Activated CD4-positive, alpha-beta T cell treated with anti-CD3 and anti-CD28 coated beads for 36 hours (primary cell): ENCODE measurements at regions of chr4 and their contacts with region 1.

Region 1: DNA sequence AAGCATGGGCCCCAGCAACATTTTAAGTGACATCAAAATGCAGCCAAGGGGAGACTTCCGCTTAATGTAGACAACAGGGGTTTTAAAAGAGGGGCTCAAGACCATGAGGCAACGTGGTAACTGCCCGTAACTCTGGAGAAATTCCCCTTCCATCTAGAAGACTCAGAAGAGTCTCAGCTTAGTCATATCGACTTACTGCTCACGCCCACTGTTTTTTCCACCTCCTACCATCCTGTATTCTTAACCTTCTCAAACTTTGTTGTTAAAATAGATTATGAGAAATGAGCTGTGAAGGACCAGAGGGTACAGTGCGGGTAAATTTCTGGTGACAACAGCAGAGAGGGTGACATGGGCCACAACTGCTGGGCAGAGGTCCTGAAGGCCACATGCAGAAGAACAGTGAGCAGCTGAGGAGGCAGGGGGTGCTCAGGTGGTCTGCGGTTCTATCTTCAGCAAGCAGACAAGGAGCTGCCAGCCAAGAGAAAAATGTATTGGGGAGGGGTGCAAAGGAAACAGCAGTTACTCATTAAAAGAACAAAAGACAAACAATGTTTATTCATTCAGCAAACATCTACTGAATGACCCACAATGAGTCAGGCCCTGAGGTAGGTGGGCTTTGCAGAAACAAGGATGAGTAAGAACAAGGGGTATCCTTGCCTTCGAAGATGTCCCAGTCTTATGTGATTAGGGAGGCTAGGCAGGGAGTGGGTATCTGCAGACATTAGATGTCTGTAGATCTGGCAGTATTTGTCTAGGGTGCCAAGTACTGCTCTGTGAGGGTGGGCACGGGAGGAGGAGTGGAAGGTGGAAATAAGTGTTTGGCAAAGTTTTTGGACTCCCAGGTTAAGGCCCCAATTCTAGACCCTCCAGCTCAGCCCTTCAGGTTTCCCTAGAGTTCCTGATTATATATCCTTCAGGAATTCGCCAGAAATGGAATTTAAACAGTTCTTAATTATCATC is 175.3 kb downstream of the TSPAN5 start:
- DNase-seq: peak; percentile 74
- ATAC-seq: peak; percentile 84
- H3K4me3 Mint-ChIP-seq: peak overlapping the region; percentile 54
- H3K27ac Mint-ChIP-seq: peak overlapping the region; percentile 98
- H3K4me1 Mint-ChIP-seq: peaks cover 80% of the 10 kb centered on the region
- H3K27me3 Mint-ChIP-seq: no peaks in the 10 kb centered on the region

Region 2: DNA sequence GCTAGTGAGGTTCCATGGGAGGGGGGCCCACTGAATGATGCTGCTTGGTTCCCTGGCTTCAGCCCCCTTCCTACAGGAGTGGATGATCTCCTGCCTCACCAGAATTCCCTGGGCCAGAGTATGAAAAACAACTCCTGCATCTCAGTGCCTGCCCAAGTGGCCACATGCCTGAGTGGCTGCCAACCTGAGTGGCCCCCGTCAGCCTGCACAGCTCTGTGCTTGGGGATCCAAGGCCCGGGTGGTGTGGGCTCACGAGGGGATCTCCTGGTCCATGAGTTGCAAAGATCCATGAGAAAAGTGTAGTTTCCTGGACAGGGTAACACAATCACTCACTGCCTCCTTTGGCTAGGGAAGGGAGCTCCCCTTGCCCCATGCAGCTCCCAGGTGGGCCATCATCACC is 357.0 kb before region 1 on chr4:
- CTCF ChIA-PET with region 1: no interaction called
- POLR2A ChIA-PET with region 1: no interaction called
- intact Hi-C with region 1: no loop called
- DNase-seq: no peak
- ATAC-seq: no peak
- H3K4me3 Mint-ChIP-seq: no peak overlapping the region
- H3K27ac Mint-ChIP-seq: no peak overlapping the region
- H3K4me1 Mint-ChIP-seq: no peaks in the 10 kb centered on the region
- H3K27me3 Mint-ChIP-seq: peaks cover 7% of the 10 kb centered on the region

Region 3: DNA sequence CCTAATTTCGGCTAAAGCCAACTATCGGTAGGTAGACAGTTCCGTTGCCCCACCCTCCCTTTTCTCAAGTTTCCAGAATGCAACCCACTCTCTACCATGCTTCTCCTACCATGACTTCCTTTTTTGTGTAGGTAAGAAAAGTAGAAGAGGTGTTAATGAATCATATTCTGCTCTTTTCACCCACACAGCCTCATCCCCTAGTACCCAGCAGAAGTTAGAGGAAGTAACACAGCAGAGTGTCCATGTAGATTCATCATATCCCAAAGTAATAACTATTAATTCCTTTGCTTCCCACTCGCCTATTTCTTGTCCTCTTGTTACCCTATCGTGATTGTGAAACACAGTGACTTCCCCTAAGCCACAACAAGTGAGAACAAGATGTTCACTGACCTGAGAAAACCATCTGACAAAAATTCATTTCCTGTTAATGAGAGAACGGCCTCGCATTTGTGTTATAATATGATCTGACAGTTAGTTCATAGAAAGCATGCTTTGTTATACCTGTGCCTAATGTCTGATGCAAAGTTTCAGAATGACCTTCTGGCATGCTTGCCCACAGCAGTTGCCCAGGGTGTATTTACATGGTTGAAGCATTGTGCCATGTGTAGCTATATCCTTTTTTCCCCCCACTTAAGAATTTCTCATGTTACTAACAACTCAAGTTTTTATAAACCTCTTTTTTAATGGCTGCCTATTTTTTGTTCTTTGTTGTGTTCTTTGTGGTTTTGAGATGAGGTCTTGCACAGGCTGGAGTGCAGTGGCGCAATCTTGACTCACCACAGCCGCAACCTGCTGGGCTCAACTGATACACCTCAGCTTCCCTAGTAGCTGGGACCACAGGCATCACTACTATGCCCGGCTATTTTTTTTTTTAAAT is 36.4 kb before region 1 on chr4:
- CTCF ChIA-PET with region 1: no interaction called
- POLR2A ChIA-PET with region 1: no interaction called
- intact Hi-C with region 1: loop called (anchors 2 kb)
- DNase-seq: peak; percentile 78
- ATAC-seq: peak; percentile 91
- H3K4me3 Mint-ChIP-seq: peak overlapping the region; percentile 43
- H3K27ac Mint-ChIP-seq: peak overlapping the region; percentile 93
- H3K4me1 Mint-ChIP-seq: peaks cover 36% of the 10 kb centered on the region
- H3K27me3 Mint-ChIP-seq: no peaks in the 10 kb centered on the region

Region 4: GRCh38 chr4:98510757-98511517 is 27.8 kb after region 1 on chr4:
- CTCF ChIA-PET with region 1: interaction called, 3 read pairs
- POLR2A ChIA-PET with region 1: no interaction called
- intact Hi-C with region 1: loop called (anchors 1 kb)
- DNase-seq: peak; percentile 65
- ATAC-seq: peak; percentile 88
- H3K4me3 Mint-ChIP-seq: no peak overlapping the region
- H3K27ac Mint-ChIP-seq: peak overlapping the region; percentile 75
- H3K4me1 Mint-ChIP-seq: peaks cover 53% of the 10 kb centered on the region
- H3K27me3 Mint-ChIP-seq: no peaks in the 10 kb centered on the region

Region 5: DNA sequence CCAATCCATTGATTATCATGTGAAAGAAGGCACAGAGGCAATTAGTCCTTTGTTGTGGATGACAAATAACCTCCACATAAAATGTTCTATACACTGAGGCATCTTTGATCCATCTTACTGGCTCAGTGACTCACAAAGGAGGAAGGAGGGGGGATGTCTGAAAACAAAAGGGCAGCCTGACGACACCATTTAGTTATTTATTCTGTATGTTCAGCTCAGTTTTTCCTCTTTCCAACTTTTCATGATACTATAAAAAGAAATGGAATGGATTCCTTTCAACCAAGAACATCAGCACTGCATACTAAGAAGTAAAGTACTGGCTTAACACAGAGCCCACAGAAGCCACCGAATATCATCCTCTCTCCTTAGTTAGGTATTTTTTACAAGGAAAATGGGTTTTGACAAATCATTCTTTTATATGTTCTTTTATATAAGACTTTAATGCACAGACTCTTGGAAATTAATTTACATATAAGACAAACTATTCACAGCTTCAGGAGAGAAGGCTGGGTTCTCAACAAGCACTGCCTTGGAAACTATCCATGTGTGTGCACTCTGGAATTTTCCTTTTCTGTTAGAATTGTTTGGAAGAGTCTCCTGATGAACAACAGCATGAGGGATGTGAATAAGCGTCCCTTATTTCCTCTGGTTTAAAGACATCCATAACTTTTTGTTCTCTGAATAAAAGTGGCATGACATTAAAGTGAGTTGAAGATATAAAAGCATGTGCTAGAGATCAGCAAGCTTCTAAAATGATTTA is 39.7 kb after region 1 on chr4:
- CTCF ChIA-PET with region 1: interaction called, 4 read pairs
- POLR2A ChIA-PET with region 1: interaction called, 6 read pairs
- intact Hi-C with region 1: loop called (anchors 2 kb)
- DNase-seq: no peak
- ATAC-seq: peak; percentile 84
- H3K4me3 Mint-ChIP-seq: peak overlapping the region; percentile 28
- H3K27ac Mint-ChIP-seq: peak overlapping the region; percentile 74
- H3K4me1 Mint-ChIP-seq: peaks cover 64% of the 10 kb centered on the region
- H3K27me3 Mint-ChIP-seq: no peaks in the 10 kb centered on the region

Region 6: GRCh38 chr4:99002279-99002678 is 519.2 kb after region 1 on chr4:
- CTCF ChIA-PET with region 1: no interaction called
- POLR2A ChIA-PET with region 1: no interaction called
- intact Hi-C with region 1: no loop called
- DNase-seq: no peak
- ATAC-seq: no peak
- H3K4me3 Mint-ChIP-seq: no peak overlapping the region
- H3K27ac Mint-ChIP-seq: peak overlapping the region; percentile 15
- H3K4me1 Mint-ChIP-seq: peaks cover 63% of the 10 kb centered on the region
- H3K27me3 Mint-ChIP-seq: no peaks in the 10 kb centered on the region